Colonic mucosa (tissue), 4 donors: ENCODE measurements at regions of chr3 and their contacts with region 1.

Region 1: DNA sequence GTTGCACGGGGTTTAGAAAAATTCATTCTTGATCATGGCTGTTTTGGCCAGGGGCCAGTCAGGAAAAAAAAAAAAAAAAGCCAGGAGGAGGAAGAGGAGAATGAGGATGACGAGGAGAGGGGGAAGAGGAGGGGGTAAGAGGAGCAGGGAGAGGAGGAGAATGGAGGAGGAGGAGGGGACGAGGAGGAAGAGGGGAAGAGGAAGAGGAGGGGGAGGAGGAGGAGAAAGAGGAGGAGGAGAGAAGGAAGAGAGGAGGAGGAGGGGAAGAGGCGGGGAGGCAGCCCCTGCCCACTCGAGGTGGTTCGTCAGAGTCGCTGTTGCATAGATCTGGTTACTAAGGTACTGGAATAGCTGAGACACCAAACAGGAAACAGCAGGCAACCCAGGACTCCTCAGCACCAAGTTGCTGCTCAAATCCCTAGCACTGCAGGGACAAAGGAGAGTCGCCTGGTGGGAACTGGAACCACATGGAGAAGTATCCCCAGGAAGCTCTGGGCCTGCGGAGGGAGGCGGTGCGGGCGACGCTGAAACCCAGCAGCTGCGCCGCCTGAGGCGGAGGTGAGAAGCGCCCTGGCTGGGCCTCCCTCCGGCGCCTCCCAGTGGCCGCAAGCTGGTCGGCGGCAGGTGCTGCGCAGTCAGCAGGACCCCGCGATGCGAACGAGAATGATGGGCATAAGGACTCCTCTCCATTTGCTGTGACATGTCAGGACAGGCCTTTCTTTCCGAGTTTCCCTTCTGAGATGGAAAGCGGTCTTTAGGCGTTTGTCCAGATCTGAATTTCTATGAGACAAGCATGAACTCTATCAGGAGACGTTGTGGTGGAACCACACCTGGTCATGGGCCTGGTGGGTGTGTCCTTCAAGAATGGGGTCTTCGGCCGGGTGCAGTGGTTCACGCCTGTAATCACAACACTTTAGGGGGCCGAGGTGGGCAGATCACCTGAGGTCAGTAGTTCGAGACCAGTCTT is 17.5 kb downstream of the FAM240A start:
- DNase-seq: peak; percentile 79
- H3K4me3 ChIP-seq: no peak overlapping the region
- H3K27ac ChIP-seq: peak overlapping the region; percentile 60
- H3K4me1 ChIP-seq: peaks cover 3% of the 10 kb centered on the region
- H3K27me3 ChIP-seq: no peaks in the 10 kb centered on the region
- CTCF ChIP-seq: peak; percentile 96

Region 2: DNA sequence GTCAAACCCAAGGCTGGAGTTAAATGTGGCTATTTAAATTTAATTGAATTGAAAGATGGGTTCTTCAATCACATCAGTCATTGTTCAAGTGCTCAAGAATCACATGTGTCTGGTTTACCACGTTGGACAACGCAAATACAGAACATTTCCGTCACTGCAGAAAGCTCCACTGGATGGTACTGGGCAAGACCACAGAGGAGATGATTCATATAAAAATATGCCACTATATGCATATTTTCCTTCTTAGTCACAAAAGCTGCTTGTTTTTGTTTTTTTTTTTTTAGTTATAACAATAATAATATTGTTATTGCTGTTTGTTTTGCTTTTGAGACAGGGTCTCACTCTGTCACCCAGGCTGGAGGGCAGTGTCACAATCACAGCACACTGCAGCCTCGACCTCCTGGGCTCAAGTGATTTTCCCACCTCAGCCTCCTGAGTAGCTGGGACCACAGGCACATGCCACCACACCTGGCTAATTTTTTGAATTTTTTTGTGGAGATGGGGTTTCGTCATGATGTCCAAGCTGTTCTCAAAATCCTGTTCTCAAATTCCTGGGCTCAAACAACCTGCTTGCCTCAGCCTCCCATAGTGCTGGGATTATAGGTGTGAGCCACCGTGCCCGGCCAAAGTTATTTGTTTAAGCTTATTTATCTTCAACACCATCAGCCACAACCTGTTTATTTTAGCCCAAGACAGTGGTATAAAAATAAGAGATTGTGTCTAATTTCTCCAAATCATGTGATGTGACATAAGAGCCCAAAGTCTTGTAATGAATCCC is 112.6 kb before region 1 on chr3:
- intact Hi-C with region 1: no loop called
- DNase-seq: no peak
- H3K4me3 ChIP-seq: no peak overlapping the region
- H3K27ac ChIP-seq: no peak overlapping the region
- H3K4me1 ChIP-seq: no peaks in the 10 kb centered on the region
- H3K27me3 ChIP-seq: no peaks in the 10 kb centered on the region
- CTCF ChIP-seq: no peak

Region 3: DNA sequence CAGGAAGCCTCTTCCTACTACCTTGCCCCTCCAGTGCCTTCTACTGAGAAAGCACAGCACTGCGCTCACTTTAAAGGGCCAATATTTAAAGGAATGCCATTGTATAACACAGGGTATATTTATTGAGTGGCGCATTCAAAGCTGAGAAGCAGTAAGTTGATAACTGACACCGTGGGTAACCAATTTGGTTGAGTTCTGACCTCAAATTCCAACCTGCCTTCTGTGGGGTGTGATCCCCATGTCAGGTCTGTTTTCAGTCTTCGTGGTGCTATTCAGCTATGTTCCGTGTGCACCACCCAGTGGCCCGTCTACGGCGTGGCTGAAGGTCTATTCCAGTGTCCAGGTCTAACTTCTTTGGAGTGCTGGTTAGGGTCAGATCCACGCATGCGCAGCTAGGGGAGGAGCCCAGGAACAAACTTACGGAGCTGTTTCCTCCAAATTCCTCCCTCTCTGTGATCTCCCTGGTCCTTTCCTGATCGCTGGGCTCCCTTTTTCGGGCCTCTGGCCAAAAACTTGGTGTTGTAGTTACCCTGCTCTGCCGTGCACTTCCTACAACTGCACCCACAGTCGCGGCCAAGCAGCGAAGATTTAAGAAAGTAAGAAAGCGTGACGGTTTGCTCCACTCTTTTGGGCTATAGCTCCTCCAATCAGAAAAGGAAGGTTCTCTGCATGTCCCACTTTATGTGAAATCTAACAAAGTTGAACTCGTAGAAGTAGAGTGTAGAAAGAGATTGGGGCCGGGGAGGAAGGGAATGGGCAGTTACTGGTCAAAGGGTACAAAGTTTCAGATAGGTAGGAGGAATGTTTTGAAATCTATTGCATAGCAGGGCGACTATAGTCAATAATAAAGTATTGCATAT is 71.4 kb before region 1 on chr3:
- intact Hi-C with region 1: loop called (anchors 5 kb)
- DNase-seq: peak; percentile 87
- H3K4me3 ChIP-seq: peak overlapping the region; percentile 27
- H3K27ac ChIP-seq: peak overlapping the region; percentile 48
- H3K4me1 ChIP-seq: no peaks in the 10 kb centered on the region
- H3K27me3 ChIP-seq: no peaks in the 10 kb centered on the region
- CTCF ChIP-seq: peak; percentile 54